ENCODE measurements at regions of chr4 and their contacts with region 1.

Region 1: GRCh38 chr4:84966383-84967242 is at the start of gene WDFY3:
- DNase-seq: no peak
- ATAC-seq: no peak; the same call in 2 of the 3 replicates
- H3K4me3 ChIP-seq: no peak within 1 kb of the TSS
- H3K27ac ChIP-seq: no peak within 1 kb of the TSS
- H3K4me1 ChIP-seq: no peaks in the 10 kb centered on the region
- H3K27me3 ChIP-seq: peaks cover 0 to 10% of the 10 kb centered on the region in 2 experiments; a peak in 3 of 4 replicates
- CTCF ChIP-seq: no peak
- EP300 ChIP-seq: no peak
- POLR2A ChIP-seq: no peak; the same call in 1 of the 2 replicates
- RAD21 ChIP-seq: no peak
- polyA plus RNA-seq, gene WDFY3: 0.06 TPM in 1 of 2 experiments, not detected in the other

Region 2: GRCh38 chr4:84578540-84579402 is 387.8 kb before region 1 on chr4:
- CTCF ChIA-PET with region 1: interaction called, 5 read pairs
- POLR2A ChIA-PET with region 1: no interaction called
- RAD21 ChIA-PET with region 1: interaction called, 5 read pairs
- SMC1A ChIA-PET with region 1: interaction called, 11 read pairs
- in situ Hi-C with region 1: no loop called
- intact Hi-C with region 1: loop called (anchors 5 kb)
- DNase-seq: no peak
- ATAC-seq: peak; percentile 27; the same call in 1 of the 3 replicates
- H3K4me3 ChIP-seq: no peak overlapping the region
- H3K27ac ChIP-seq: no peak overlapping the region
- H3K4me1 ChIP-seq: no peaks in the 10 kb centered on the region
- H3K27me3 ChIP-seq: peaks cover 5 to 10% of the 10 kb centered on the region in 2 experiments
- CTCF ChIP-seq: peak; percentile 38 to 40 (median 39)
- EP300 ChIP-seq: no peak
- POLR2A ChIP-seq: no peak
- RAD21 ChIP-seq: peak; percentile 18; the same call in 1 of the 2 replicates

Region 3: GRCh38 chr4:84750253-84750959 is 216.2 kb before region 1 on chr4:
- CTCF ChIA-PET with region 1: interaction called, 29 read pairs
- POLR2A ChIA-PET with region 1: no interaction called
- RAD21 ChIA-PET with region 1: interaction called, 9 read pairs
- SMC1A ChIA-PET with region 1: interaction called, 9 read pairs
- in situ Hi-C with region 1: loop called (anchors 10 kb)
- intact Hi-C with region 1: loop called (anchors 1 kb)
- DNase-seq: no peak
- ATAC-seq: peak; percentile 74
- H3K4me3 ChIP-seq: no peak overlapping the region
- H3K27ac ChIP-seq: no peak overlapping the region
- H3K4me1 ChIP-seq: no peaks in the 10 kb centered on the region
- H3K27me3 ChIP-seq: no peaks in the 10 kb centered on the region
- CTCF ChIP-seq: peak; percentile 52 to 60 (median 56)
- EP300 ChIP-seq: no peak
- POLR2A ChIP-seq: no peak
- RAD21 ChIP-seq: peak; percentile 37; the same call in 1 of the 2 replicates

Measured in GM12878 (cell line).